ENCODE measurements at regions of chr10 and their contacts with region 1.

Region 1: GRCh38 chr10:48215488-48216204 is 58.9 kb downstream of the FRMPD2 start:
- DNase-seq: peak; percentile 28
- ATAC-seq: peak; percentile 97
- H3K4me3 ChIP-seq: no peak overlapping the region
- H3K27ac ChIP-seq: no peak overlapping the region
- H3K4me1 ChIP-seq: no peaks in the 10 kb centered on the region
- H3K27me3 ChIP-seq: peaks cover 4% of the 10 kb centered on the region
- CTCF ChIP-seq: peak; percentile 57 to 86 (median 83); a peak in 5 of 6 replicates
- POLR2A ChIP-seq: no peak
- RAD21 ChIP-seq: peak; percentile 63

Region 2: GRCh38 chr10:48231699-48232315 is 16.2 kb after region 1 on chr10:
- CTCF ChIA-PET with region 1: no interaction called
- POLR2A ChIA-PET with region 1: no interaction called
- RAD21 ChIA-PET with region 1: no interaction called
- intact Hi-C with region 1: no loop called
- DNase-seq: no peak
- ATAC-seq: no peak
- H3K4me3 ChIP-seq: no peak overlapping the region
- H3K27ac ChIP-seq: no peak overlapping the region
- H3K4me1 ChIP-seq: no peaks in the 10 kb centered on the region
- H3K27me3 ChIP-seq: peaks cover 9% of the 10 kb centered on the region; the same call in 1 of the 2 replicates
- CTCF ChIP-seq: no peak
- POLR2A ChIP-seq: no peak
- RAD21 ChIP-seq: no peak

Region 3: DNA sequence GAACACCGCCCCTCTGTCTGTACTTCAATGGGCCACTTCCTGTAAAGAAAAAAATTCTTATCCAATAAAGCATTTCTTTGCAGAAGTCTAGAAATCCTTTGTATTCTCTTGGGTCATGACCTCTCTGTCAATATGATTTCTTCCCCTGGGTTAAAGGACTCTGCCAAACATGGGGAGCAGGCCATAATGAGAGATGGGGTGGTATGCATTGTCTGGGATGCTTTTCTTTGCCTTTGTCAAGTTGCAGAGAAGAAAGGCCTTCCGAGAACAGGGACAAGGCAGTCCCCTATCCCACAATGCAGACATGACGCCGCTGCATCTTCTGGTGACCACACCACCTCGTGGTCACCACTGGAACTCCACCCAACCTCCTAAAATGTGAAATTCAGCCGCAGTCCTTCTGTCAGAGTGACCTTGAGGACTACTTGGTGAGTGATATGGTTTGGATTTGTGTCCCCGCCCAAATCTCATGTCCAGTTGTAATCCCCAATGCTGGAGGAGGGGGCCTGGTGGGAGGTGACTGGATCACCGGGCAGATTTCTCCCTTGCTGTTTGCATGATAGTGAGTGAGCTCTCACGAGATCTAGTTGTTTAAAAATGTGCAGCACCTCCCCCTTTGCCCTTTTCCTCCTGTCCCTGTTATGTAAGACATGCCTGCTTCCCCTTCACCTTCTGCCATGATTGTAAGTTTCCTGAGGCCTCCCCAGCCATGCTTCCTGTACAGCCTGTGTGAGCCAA is 74.0 kb after region 1 on chr10:
- CTCF ChIA-PET with region 1: interaction called, 3 read pairs
- POLR2A ChIA-PET with region 1: no interaction called
- RAD21 ChIA-PET with region 1: no interaction called
- intact Hi-C with region 1: loop called (anchors 1 kb)
- DNase-seq: peak; percentile 57
- ATAC-seq: peak; percentile 91
- H3K4me3 ChIP-seq: no peak overlapping the region
- H3K27ac ChIP-seq: no peak overlapping the region
- H3K4me1 ChIP-seq: peaks cover 2 to 7% of the 10 kb centered on the region in 2 experiments; a peak in 2 of 4 replicates
- H3K27me3 ChIP-seq: no peaks in the 10 kb centered on the region
- CTCF ChIP-seq: peak; percentile 59 to 83 (median 76)
- POLR2A ChIP-seq: no peak
- RAD21 ChIP-seq: peak; percentile 69

Region 4: GRCh38 chr10:48506147-48506917 is 290.7 kb after region 1 on chr10:
- CTCF ChIA-PET with region 1: no interaction called
- POLR2A ChIA-PET with region 1: no interaction called
- RAD21 ChIA-PET with region 1: no interaction called
- intact Hi-C with region 1: loop called (anchors 5 kb)
- DNase-seq: peak; percentile 68
- ATAC-seq: peak; percentile 96
- H3K4me3 ChIP-seq: no peak overlapping the region
- H3K27ac ChIP-seq: no peak overlapping the region
- H3K4me1 ChIP-seq: peaks cover 5 to 15% of the 10 kb centered on the region in 2 experiments; a peak in 3 of 4 replicates
- H3K27me3 ChIP-seq: no peaks in the 10 kb centered on the region
- CTCF ChIP-seq: peak; percentile 68 to 98 (median 70)
- POLR2A ChIP-seq: no peak
- RAD21 ChIP-seq: peak; percentile 85

Measured in HCT116 (cell line).